AG04449 (cell line): ENCODE measurements at regions of chr2 and their contacts with region 1.

Region 1: GRCh38 chr2:64036034-64036705 is 16.9 kb upstream of the VPS54 start:
- DNase-seq: no peak
- H3K4me3 ChIP-seq: no peak overlapping the region
- CTCF ChIP-seq: no peak

Region 2: DNA sequence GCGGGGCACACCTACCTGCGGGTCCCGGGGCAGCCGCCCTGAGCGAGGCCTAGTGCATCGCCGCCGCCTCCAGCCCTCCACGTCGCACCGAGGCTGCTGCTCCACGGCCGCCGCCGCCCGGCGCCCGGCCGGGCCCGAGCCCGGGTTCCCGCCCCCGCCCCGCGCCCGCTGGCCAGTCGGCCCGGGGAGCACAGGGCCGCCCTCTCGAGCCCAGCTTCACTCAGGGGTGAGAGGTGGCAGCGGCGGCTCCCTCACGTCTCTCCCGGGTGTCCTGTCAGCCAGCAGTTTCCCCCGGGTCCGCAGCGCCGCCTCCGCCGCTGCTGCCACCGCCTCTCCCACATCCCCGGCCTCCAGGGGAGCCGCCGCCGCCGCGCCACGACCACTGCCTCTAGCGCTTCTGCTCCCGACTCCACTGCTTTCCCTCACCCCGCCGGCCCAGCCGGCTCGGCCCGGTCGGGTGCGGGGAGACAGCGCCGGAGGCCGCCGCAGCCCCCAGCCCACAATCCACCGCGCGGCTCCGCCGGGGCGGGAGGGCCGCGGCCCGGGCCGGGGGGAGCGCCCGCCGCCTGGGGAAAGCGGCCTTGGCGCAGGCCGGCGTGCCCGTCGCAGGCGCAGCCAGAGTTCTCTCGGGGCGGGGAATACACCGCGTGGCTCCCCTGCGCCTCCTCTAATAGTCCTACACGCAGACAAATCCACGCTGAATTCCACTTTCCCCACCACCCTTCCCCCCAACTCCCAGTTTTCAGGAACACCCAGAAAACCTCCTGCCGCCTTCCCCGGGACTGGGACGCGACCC is 17.0 kb before region 1 on chr2 and contains the start of gene VPS54:
- CTCF ChIA-PET with region 1: interaction called, 16 read pairs
- POLR2A ChIA-PET with region 1: interaction called, 3 read pairs
- DNase-seq: no peak
- H3K4me3 ChIP-seq: peak within 1 kb of the TSS; percentile 68
- CTCF ChIP-seq: no peak

Region 3: DNA sequence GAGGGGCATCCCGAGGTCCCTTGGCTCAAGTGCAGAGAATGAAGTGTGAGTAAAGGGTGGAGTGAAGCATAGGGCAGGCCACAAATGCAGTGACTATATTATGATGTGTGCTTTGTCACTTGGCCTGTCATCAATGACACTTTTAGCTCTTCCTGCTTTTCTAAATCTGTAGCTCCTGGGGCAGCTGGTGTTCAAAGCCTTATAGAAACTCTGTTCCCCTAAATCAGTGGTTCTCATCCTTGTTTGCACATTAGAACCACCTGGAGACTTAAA is 282.2 kb after region 1 on chr2:
- CTCF ChIA-PET with region 1: no interaction called
- POLR2A ChIA-PET with region 1: no interaction called
- DNase-seq: no peak
- H3K4me3 ChIP-seq: no peak overlapping the region
- CTCF ChIP-seq: no peak